Naive thymus-derived CD4-positive, alpha-beta T cell (primary cell): ENCODE measurements at regions of chr4 and their contacts with region 1.

Region 1: DNA sequence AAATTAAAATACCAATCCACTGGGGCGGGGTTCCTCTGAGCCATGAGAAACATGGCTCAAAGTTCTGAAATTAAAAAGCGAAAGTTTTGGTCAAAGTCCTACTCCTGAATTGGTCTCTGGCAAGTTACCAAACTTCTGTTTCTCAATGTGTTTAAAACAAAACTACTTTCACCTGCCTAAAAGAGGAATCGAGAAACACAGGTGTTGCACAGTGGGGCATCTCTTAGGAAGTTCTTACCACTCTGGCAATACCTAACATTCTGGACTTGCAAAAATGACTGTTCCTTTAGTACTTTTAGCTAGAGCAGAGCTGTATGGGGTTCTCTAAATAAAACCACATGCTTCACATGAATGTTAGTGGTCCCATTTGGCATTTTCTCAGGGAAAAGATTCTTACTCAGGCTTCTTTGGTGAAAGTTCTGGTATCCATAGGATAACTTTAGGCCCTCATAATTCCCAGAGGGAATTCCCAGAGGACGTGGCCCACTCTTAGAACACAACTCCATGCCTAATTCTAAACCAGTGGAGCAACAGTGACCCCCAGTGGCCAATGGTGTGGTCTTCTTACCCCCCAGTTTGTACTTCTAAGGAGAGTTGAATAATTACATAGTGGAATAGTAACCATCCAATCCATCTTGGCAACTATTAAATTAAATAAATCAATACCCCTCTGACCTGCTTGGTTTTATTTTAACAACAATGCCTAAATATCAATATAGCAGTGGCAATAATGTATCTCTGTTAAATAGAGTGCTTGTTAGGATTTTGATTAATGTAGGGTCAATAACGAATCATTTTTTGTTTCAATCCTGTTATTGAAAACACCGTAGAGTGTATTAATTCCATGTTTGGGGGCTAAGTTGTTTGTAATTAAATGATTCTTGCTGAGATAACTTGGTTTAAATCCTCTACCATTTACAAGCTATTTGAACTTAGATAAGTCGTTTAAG is 21.9 kb downstream of the BMP3 start:
- DNase-seq: peak in 7 of 9 donors; percentile 11 to 52 (median 26)
- ATAC-seq: peak; percentile 54
- H3K4me3 ChIP-seq: no peak overlapping the region
- H3K4me3 Mint-ChIP-seq: no peak overlapping the region
- H3K27ac ChIP-seq: no peak overlapping the region
- H3K27ac Mint-ChIP-seq: no peak overlapping the region
- H3K4me1 ChIP-seq: no peaks in the 10 kb centered on the region
- H3K4me1 Mint-ChIP-seq: no peaks in the 10 kb centered on the region
- H3K27me3 ChIP-seq: peaks cover 0 to 1% of the 10 kb centered on the region in 2 donors
- H3K27me3 Mint-ChIP-seq: peaks cover 0 to 16% (median 11%) of the 10 kb centered on the region in 5 donors

Region 2: GRCh38 chr4:79917246-79917645 is 1135.1 kb before region 1 on chr4:
- CTCF ChIA-PET with region 1: no interaction called
- POLR2A ChIA-PET with region 1: no interaction called
- intact Hi-C with region 1: loop called in 1 of 2 experiments (anchors 10 kb)
- DNase-seq: peak in 7 of 9 donors; percentile 10 to 43 (median 22)
- ATAC-seq: peak; percentile 62
- H3K4me3 ChIP-seq: no peak overlapping the region
- H3K4me3 Mint-ChIP-seq: no peak overlapping the region
- H3K27ac ChIP-seq: no peak overlapping the region
- H3K27ac Mint-ChIP-seq: no peak overlapping the region
- H3K4me1 ChIP-seq: no peaks in the 10 kb centered on the region
- H3K4me1 Mint-ChIP-seq: peaks cover 0 to 16% (median 6%) of the 10 kb centered on the region in 7 donors
- H3K27me3 ChIP-seq: no peaks in the 10 kb centered on the region
- H3K27me3 Mint-ChIP-seq: no peaks in the 10 kb centered on the region

Region 3: GRCh38 chr4:80221161-80221560 is 831.2 kb before region 1 on chr4:
- CTCF ChIA-PET with region 1: no interaction called
- POLR2A ChIA-PET with region 1: no interaction called
- intact Hi-C with region 1: loop called in 1 of 2 experiments (anchors 1 kb)
- DNase-seq: no peak
- ATAC-seq: no peak
- H3K4me3 ChIP-seq: no peak overlapping the region
- H3K4me3 Mint-ChIP-seq: no peak overlapping the region
- H3K27ac ChIP-seq: no peak overlapping the region
- H3K27ac Mint-ChIP-seq: no peak overlapping the region
- H3K4me1 ChIP-seq: no peaks in the 10 kb centered on the region
- H3K4me1 Mint-ChIP-seq: no peaks in the 10 kb centered on the region
- H3K27me3 ChIP-seq: peaks cover 0 to 4% of the 10 kb centered on the region in 2 donors
- H3K27me3 Mint-ChIP-seq: peaks cover 4 to 52% (median 29%) of the 10 kb centered on the region in 5 donors

Region 4: GRCh38 chr4:80948141-80948540 is 104.3 kb before region 1 on chr4:
- CTCF ChIA-PET with region 1: no interaction called
- POLR2A ChIA-PET with region 1: no interaction called
- intact Hi-C with region 1: no loop called
- DNase-seq: no peak
- ATAC-seq: no peak
- H3K4me3 ChIP-seq: no peak overlapping the region
- H3K4me3 Mint-ChIP-seq: no peak overlapping the region
- H3K27ac ChIP-seq: no peak overlapping the region
- H3K27ac Mint-ChIP-seq: no peak overlapping the region
- H3K4me1 ChIP-seq: no peaks in the 10 kb centered on the region
- H3K4me1 Mint-ChIP-seq: no peaks in the 10 kb centered on the region
- H3K27me3 ChIP-seq: no peaks in the 10 kb centered on the region
- H3K27me3 Mint-ChIP-seq: peaks cover 0 to 20% (median 8%) of the 10 kb centered on the region in 5 donors